Tibial artery (tissue), 4 donors: ENCODE measurements at regions of chr22 and their contacts with region 1.

Region 1: GRCh38 chr22:35905894-35906293 is 122.7 kb downstream of the RBFOX2 start:
- DNase-seq: no peak
- H3K4me3 ChIP-seq: no peak overlapping the region
- H3K27ac ChIP-seq: no peak overlapping the region
- H3K4me1 ChIP-seq: peaks cover 0 to 10% (median 2%) of the 10 kb centered on the region in 4 donors
- H3K27me3 ChIP-seq: no peaks in the 10 kb centered on the region
- CTCF ChIP-seq: no peak

Region 2: DNA sequence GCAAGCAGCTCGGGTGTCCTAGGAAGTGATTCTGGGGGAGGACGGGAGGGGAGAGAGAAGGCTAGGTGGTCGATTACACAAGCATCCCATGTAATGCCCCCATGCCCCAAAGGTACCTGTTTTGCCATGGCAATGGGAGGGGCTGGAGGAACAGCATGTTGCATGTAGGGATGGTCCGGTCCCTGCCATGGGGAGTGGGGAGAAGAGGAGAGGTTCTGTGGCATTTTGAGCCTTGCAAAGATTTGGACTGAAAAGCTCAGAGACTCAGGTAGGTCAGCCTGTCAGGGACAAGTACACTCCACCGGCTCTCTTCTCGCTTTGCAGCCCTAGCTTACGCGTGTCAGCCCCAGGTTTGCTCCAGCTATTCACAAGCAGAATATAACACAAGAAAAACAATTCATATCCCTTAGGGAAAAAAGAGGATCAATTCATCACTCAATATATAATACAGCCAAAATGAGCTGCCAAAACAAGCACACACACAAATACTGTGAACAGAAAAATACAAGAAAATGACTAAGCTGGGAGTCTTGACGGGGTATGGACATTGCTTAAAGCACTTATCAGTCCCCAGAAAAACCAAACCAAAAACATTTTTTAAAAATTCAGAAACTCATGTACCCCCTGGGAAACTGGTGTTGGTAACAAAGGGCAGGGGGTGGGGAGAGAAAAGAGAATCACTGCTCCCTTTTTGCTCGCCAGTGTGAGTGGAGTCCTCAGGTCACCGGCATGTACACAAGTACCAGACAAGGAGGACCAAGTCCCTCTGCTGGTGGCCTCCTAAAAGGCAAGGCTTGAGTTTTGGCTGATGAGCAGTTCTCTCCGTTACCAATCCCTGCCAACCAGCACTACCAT is 166.6 kb before region 1 on chr22:
- intact Hi-C with region 1: no loop called
- DNase-seq: peak; percentile 54 to 77
- H3K4me3 ChIP-seq: no peak overlapping the region
- H3K27ac ChIP-seq: peak overlapping the region; percentile 18 to 45
- H3K4me1 ChIP-seq: peaks cover 0 to 12% (median 0%) of the 10 kb centered on the region in 4 donors
- H3K27me3 ChIP-seq: no peaks in the 10 kb centered on the region
- CTCF ChIP-seq: peak; percentile 45 to 64

Region 3: GRCh38 chr22:35889071-35889470 is 16.8 kb before region 1 on chr22:
- intact Hi-C with region 1: loop called (anchors 1 kb)
- DNase-seq: no peak
- H3K4me3 ChIP-seq: no peak overlapping the region
- H3K27ac ChIP-seq: no peak overlapping the region
- H3K4me1 ChIP-seq: peaks cover 5 to 33% (median 19%) of the 10 kb centered on the region in 4 donors
- H3K27me3 ChIP-seq: no peaks in the 10 kb centered on the region
- CTCF ChIP-seq: no peak